ENCODE measurements at regions of chr20 and their contacts with region 1.

Region 1: GRCh38 chr20:50958615-50959542 is at the start of gene MOCS3:
- DNase-seq: peak; percentile 85
- H3K4me3 Mint-ChIP-seq: peak within 1 kb of the TSS; percentile 99
- H3K27ac Mint-ChIP-seq: peak within 1 kb of the TSS; percentile 86
- H3K4me1 Mint-ChIP-seq: peaks cover 57% of the 10 kb centered on the region
- H3K27me3 Mint-ChIP-seq: no peaks in the 10 kb centered on the region
- total RNA-seq, gene MOCS3: 4.1 to 4.7 TPM

Region 2: DNA sequence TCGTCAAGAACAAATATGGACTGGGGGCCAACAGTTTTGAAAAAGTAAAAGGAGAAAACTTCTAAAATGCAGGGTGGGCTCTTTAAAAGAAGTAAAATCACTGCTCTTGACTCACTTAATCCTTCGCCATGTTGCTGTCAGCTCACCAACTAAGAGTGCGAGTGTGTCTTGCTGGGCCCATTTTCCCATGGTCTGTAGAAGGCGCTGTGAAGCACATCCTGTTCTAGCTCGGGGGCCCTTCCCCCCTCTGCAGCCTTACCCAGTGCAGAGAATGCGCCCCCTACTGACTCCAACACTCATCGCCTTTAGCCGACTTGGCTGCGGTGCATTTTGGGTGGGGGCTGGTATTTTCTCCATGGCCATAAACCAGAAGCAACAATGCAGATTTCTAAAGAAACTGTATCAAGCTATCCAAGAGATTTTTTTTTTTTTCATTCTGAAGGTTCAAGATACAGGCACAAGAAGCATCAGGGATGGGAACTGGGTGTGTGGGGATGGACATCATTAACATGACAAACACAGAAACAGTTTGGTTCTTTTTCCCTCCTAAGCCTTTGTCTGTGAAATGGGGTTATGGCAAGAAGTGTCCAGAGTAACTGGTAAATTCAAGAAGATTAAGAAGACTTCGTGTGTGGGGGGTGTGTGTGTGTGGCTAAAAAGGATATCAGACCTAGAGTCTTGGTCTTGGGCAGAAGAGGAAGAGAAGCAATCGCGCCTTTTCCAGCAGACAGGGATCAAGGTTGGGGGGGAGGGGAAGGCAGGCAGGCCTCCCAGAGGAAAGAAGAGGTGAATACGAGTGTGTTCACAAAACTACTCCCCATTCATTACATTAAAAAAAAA is 29.4 kb before region 1 on chr20:
- CTCF ChIA-PET with region 1: interaction called, 44 read pairs
- POLR2A ChIA-PET with region 1: interaction called, 170 read pairs
- DNase-seq: peak; percentile 96
- H3K4me3 Mint-ChIP-seq: peak overlapping the region; percentile 91
- H3K27ac Mint-ChIP-seq: peak overlapping the region; percentile 96
- H3K4me1 Mint-ChIP-seq: peaks cover 56% of the 10 kb centered on the region
- H3K27me3 Mint-ChIP-seq: no peaks in the 10 kb centered on the region

Region 3: GRCh38 chr20:50943069-50943468 is 15.8 kb before region 1 on chr20:
- CTCF ChIA-PET with region 1: no interaction called
- POLR2A ChIA-PET with region 1: interaction called, 12 read pairs
- DNase-seq: no peak
- H3K4me3 Mint-ChIP-seq: no peak overlapping the region
- H3K27ac Mint-ChIP-seq: no peak overlapping the region
- H3K4me1 Mint-ChIP-seq: no peaks in the 10 kb centered on the region
- H3K27me3 Mint-ChIP-seq: no peaks in the 10 kb centered on the region

Region 4: GRCh38 chr20:50948132-50948785 is 10.6 kb before region 1 on chr20:
- CTCF ChIA-PET with region 1: no interaction called
- POLR2A ChIA-PET with region 1: interaction called, 12 read pairs
- DNase-seq: no peak
- H3K4me3 Mint-ChIP-seq: no peak overlapping the region
- H3K27ac Mint-ChIP-seq: no peak overlapping the region
- H3K4me1 Mint-ChIP-seq: peaks cover 11% of the 10 kb centered on the region
- H3K27me3 Mint-ChIP-seq: no peaks in the 10 kb centered on the region

Measured in activated CD4-positive, alpha-beta memory T cell treated with anti-CD3 and anti-CD28 coated beads, Interleukin-2, amount 10 ng/mL, durations not matched to agents 7 days and 5 days (primary cell).